ENCODE measurements at regions of chr19 and their contacts with region 1.

Region 1: GRCh38 chr19:12139885-12140547 is at the start of gene ZNF20:
- DNase-seq: peak; percentile 91
- ATAC-seq: peak; percentile 96
- H3K4me3 ChIP-seq: peak within 1 kb of the TSS; percentile 73 to 93 (median 83)
- H3K4me3 Mint-ChIP-seq: peak within 1 kb of the TSS; percentile 84
- H3K27ac ChIP-seq: peak within 1 kb of the TSS; percentile 31 to 62
- H3K27ac Mint-ChIP-seq: peak within 1 kb of the TSS; percentile 86
- H3K4me1 ChIP-seq: peaks cover 15 to 23% of the 10 kb centered on the region in 2 donors
- H3K4me1 Mint-ChIP-seq: peaks cover 34% of the 10 kb centered on the region
- H3K27me3 ChIP-seq: no peaks in the 10 kb centered on the region
- H3K27me3 Mint-ChIP-seq: no peaks in the 10 kb centered on the region
- CTCF ChIP-seq: no peak
- total RNA-seq, gene ZNF20: 5.4 and 10.6 TPM in 2 replicates

Region 2: DNA sequence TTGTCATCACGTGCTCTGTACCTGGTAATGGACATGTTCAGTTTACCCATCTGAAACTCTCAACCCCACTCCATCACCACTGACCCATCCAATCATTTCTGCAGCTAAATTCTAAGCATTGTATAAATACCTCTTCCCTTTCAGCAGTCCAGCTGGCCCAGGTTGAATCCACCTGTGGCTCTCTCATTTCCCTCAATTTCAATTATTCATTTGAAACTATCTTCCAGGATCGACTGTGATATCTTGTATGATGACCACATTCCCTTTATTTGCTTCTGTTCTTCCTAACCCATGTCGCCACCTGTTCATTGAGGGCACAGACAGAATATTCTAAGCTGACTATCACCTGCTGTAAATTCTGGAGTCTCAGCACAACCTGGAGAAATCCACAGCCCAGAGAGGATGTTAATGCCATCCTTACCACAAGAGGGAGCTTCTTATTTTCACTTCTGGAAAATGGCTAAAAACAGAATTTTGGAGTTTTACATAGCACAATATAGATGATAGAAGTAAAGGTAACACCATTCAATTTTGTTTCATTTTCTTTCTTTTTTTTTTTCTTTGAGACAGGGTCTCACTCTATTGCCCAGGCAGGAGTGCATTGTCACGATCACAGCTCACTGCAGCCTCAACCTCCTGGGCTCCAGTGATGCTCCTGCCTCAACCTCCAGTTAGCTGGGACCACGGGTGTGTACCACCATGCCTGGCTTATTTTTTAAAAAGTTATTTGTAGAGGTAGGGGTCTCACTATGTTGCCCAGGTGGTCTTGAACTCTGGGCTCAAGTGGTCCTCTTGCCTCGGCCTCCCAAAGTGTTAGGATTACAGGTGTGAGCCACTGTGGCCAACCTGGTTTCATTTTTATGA is 439.9 kb before region 1 on chr19:
- CTCF ChIA-PET with region 1: interaction called, 14 read pairs
- POLR2A ChIA-PET with region 1: no interaction called
- intact Hi-C with region 1: loop called (anchors 2 kb)
- DNase-seq: peak; percentile 54
- ATAC-seq: no peak
- H3K4me3 ChIP-seq: no peak overlapping the region
- H3K4me3 Mint-ChIP-seq: no peak overlapping the region
- H3K27ac ChIP-seq: no peak overlapping the region
- H3K27ac Mint-ChIP-seq: no peak overlapping the region
- H3K4me1 ChIP-seq: peaks cover 1% of the 10 kb centered on the region in 2 donors
- H3K4me1 Mint-ChIP-seq: peaks cover under 1% of the 10 kb centered on the region
- H3K27me3 ChIP-seq: peaks cover 0 to 7% (median 3%) of the 10 kb centered on the region in 4 experiments
- H3K27me3 Mint-ChIP-seq: peaks cover 11% of the 10 kb centered on the region
- CTCF ChIP-seq: peak; percentile 83

Region 3: DNA sequence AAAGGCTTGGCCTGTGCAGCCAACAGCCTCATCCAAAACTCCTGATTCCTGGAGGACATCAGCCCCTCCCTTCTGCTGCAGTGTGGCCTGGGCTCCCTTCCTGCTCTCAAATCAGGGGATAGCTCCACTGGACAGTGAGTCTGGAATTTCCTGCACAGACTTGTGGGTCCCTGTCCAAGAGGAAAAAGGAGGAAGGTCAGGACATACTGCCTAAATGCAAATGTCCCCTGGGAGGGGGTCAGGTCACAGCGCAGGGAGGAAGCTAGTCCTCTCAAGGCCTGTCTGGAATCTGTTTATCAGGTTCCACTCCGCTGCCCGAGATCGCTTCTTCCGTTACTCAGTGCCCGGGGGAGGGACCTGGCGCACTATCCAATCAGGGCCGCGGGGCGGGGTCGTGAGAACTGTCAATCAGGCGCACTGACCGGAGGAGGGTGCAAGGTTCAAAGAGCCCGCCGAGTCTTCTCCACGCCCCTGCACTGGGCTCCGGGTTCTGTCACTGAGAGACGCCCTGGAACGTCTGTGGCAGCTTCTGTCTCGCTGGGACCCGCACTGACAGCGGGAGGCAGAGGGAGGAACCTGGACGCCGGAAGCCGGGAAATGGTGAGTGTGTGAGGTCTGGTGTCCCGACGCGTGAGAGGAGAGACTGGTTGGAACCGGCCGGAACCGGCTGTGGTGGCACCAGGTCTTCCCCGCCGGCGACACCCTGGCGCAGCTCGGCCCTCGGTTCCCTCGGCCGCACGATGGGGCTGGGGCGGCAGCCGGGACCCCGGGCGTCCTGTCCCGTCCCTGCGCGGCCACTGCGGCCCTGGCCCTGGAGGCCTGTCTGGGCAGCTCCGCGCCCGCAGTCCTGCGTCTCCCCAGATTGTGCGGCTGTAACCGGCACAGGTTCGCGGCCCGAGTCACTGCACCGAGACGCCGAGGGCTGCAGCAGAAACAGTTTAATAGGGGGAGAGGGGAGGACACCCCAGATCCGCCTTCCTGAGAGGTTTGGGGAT is 373.1 kb before region 1 on chr19 and contains the start of gene ZNF441:
- CTCF ChIA-PET with region 1: interaction called, 3 read pairs
- POLR2A ChIA-PET with region 1: no interaction called
- intact Hi-C with region 1: loop called (anchors 1 kb)
- DNase-seq: peak; percentile 91
- ATAC-seq: peak; percentile 95
- H3K4me3 ChIP-seq: peak within 1 kb of the TSS; percentile 32 to 94 (median 87)
- H3K4me3 Mint-ChIP-seq: peak within 1 kb of the TSS; percentile 99
- H3K27ac ChIP-seq: peak within 1 kb of the TSS; percentile 90 to 94
- H3K27ac Mint-ChIP-seq: peak within 1 kb of the TSS; percentile 99
- H3K4me1 ChIP-seq: peaks cover 16 to 22% of the 10 kb centered on the region in 2 donors
- H3K4me1 Mint-ChIP-seq: peaks cover 23% of the 10 kb centered on the region
- H3K27me3 ChIP-seq: no peaks in the 10 kb centered on the region
- H3K27me3 Mint-ChIP-seq: peaks cover 4% of the 10 kb centered on the region
- CTCF ChIP-seq: no peak
- total RNA-seq, gene ZNF441: 43.5 and 45.3 TPM in 2 replicates

Region 4: GRCh38 chr19:11814029-11814699 is 325.9 kb before region 1 on chr19 and contains the start of gene ZNF440:
- CTCF ChIA-PET with region 1: interaction called, 6 read pairs
- POLR2A ChIA-PET with region 1: no interaction called
- intact Hi-C with region 1: loop called (anchors 5 kb)
- DNase-seq: peak; percentile 85
- ATAC-seq: peak; percentile 99
- H3K4me3 ChIP-seq: peak within 1 kb of the TSS; percentile 75 to 94 (median 82)
- H3K4me3 Mint-ChIP-seq: peak within 1 kb of the TSS; percentile 91
- H3K27ac ChIP-seq: peak within 1 kb of the TSS; percentile 39 to 66
- H3K27ac Mint-ChIP-seq: peak within 1 kb of the TSS; percentile 85
- H3K4me1 ChIP-seq: peaks cover 4 to 14% of the 10 kb centered on the region in 2 donors
- H3K4me1 Mint-ChIP-seq: peaks cover 29% of the 10 kb centered on the region
- H3K27me3 ChIP-seq: no peaks in the 10 kb centered on the region
- H3K27me3 Mint-ChIP-seq: no peaks in the 10 kb centered on the region
- CTCF ChIP-seq: no peak
- total RNA-seq, gene ZNF440: 22.4 and 23.4 TPM in 2 replicates

Region 5: GRCh38 chr19:11964858-11965645 is 175.0 kb before region 1 on chr19 and contains the start of gene ZNF763:
- CTCF ChIA-PET with region 1: interaction called, 44 read pairs
- POLR2A ChIA-PET with region 1: interaction called, 5 read pairs
- intact Hi-C with region 1: loop called (anchors 1 kb)
- DNase-seq: peak; percentile 95
- ATAC-seq: peak; percentile 91
- H3K4me3 ChIP-seq: peak within 1 kb of the TSS; percentile 76 to 97 (median 89)
- H3K4me3 Mint-ChIP-seq: peak within 1 kb of the TSS; percentile 99
- H3K27ac ChIP-seq: peak within 1 kb of the TSS; percentile 99
- H3K27ac Mint-ChIP-seq: peak within 1 kb of the TSS; percentile 99
- H3K4me1 ChIP-seq: peaks cover 14 to 20% of the 10 kb centered on the region in 2 donors
- H3K4me1 Mint-ChIP-seq: peaks cover 27% of the 10 kb centered on the region
- H3K27me3 ChIP-seq: no peaks in the 10 kb centered on the region
- H3K27me3 Mint-ChIP-seq: no peaks in the 10 kb centered on the region
- CTCF ChIP-seq: no peak
- total RNA-seq, gene ZNF763: 14.2 and 16.6 TPM in 2 replicates

Region 6: DNA sequence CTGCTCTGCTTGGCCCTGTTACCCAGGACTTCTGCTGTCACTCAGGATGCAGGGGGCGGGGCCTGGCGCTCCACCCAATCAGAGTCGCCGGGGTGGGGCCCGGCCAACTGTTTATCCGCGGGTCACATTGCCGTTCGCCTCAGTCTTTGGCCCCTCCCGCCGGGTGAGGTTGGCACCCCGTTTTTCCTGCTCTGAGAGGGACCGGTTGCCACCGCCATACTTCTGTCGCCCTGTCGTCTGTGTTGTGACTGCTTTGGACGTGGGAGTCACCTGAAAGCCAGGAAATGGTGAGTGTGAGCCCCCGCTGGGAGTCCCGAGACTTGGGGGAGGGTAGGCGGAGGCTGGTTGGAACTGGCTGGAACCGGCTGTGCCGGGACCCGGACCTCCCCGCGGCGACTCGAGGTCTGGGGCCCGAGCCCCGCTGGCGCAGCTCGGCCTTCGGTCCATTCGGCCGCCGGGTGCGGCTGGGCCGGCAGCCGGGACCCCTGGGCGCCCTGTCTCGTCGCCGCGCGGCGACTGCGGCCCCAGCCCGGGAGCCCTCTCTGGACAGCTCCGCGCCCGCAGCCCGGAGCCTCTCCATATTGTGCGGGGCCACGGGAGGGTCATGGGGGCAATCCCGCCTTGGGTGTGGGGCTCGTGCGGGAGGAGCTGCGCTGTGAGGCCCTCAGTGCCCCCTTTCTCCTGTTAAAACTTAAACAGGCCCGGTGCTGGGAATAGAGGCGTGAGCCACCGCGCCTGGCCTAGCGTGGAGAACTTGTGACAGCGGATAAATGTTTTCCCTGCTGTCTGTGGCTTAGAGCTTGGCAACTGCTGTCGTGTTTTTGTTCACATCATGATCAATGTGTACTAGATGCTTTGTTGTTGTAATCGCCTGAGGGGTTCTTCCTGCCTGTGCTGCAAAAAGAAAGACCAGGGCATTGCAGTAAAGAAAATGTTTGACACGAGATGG is 75.2 kb before region 1 on chr19 and contains the start of gene ZNF844:
- CTCF ChIA-PET with region 1: interaction called, 60 read pairs
- POLR2A ChIA-PET with region 1: interaction called, 4 read pairs
- intact Hi-C with region 1: loop called (anchors 1 kb)
- DNase-seq: peak; percentile 89
- ATAC-seq: peak; percentile 96
- H3K4me3 ChIP-seq: peak within 1 kb of the TSS; percentile 73 to 93 (median 76)
- H3K4me3 Mint-ChIP-seq: peak within 1 kb of the TSS; percentile 95
- H3K27ac ChIP-seq: peak within 1 kb of the TSS; percentile 83 to 87
- H3K27ac Mint-ChIP-seq: peak within 1 kb of the TSS; percentile 94
- H3K4me1 ChIP-seq: peaks cover 6 to 16% of the 10 kb centered on the region in 2 donors
- H3K4me1 Mint-ChIP-seq: peaks cover 11% of the 10 kb centered on the region
- H3K27me3 ChIP-seq: no peaks in the 10 kb centered on the region
- H3K27me3 Mint-ChIP-seq: no peaks in the 10 kb centered on the region
- CTCF ChIP-seq: no peak
- total RNA-seq, gene ZNF844: 33.7 and 36.4 TPM in 2 replicates

Region 7: DNA sequence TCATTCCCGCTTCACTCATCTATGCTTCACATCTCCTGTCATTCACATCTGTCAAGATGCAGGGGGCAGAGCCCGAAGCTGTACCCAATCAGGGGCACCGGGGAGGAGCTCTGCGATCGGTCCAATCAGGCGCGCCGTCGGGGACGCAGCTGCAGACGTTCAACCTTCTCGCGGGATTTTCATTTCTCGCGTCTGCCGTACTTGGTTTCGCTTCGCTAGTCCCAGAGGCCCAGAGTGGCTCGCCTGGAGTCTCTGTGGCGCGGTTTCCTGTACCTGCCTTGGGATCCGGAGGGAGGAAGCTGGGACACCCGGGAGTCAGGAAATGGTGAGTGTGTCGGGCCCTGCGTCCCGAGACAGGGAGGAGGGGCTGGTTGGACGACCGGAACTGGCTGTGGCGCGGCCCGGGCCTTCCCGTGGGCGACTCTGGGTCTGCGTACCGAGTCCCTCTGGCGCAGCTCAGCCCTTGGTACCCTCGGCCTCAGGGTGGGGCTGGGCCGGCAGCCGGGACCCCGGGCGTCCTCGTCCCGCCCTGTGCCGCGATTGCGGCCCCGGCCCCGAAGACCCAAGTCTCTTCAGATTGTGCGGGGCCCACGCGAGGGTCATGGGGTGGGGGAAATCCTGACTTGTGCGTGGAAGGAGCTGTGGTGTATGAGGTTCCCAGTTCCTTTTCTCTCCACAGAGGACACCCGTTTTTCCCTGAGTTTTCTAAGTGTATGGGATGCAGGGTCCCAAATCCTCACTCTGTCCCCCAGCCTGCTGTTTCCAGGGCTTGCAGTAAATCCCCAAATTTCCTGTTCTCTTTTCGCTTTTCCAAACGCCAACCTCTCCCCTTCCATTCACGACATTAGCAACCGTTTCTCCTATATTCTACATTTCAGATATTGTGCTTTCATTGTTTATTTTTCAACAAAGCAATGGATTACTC is 23.1 kb after region 1 on chr19 and contains the start of gene ZNF136:
- CTCF ChIA-PET with region 1: interaction called, 4 read pairs
- POLR2A ChIA-PET with region 1: interaction called, 5 read pairs
- intact Hi-C with region 1: loop called (anchors 2 kb)
- DNase-seq: peak; percentile 94
- ATAC-seq: peak; percentile 99
- H3K4me3 ChIP-seq: peak within 1 kb of the TSS; percentile 58 to 96 (median 91)
- H3K4me3 Mint-ChIP-seq: peak within 1 kb of the TSS; percentile 92
- H3K27ac ChIP-seq: peak within 1 kb of the TSS; percentile 96 to 99
- H3K27ac Mint-ChIP-seq: peak within 1 kb of the TSS; percentile 99
- H3K4me1 ChIP-seq: peaks cover 10 to 15% of the 10 kb centered on the region in 2 donors
- H3K4me1 Mint-ChIP-seq: peaks cover 34% of the 10 kb centered on the region
- H3K27me3 ChIP-seq: no peaks in the 10 kb centered on the region
- H3K27me3 Mint-ChIP-seq: no peaks in the 10 kb centered on the region
- CTCF ChIP-seq: no peak
- total RNA-seq, gene ZNF136: 30.8 and 33.5 TPM in 2 replicates

Region 8: GRCh38 chr19:12333162-12334159 is 193.4 kb after region 1 on chr19 and contains the start of gene ZNF563:
- CTCF ChIA-PET with region 1: no interaction called
- POLR2A ChIA-PET with region 1: no interaction called
- intact Hi-C with region 1: no loop called
- DNase-seq: peak; percentile 95
- ATAC-seq: peak; percentile 92
- H3K4me3 ChIP-seq: peak within 1 kb of the TSS; percentile 53 to 97 (median 83)
- H3K4me3 Mint-ChIP-seq: peak within 1 kb of the TSS; percentile 88
- H3K27ac ChIP-seq: peak within 1 kb of the TSS; percentile 76 to 86
- H3K27ac Mint-ChIP-seq: peak within 1 kb of the TSS; percentile 95
- H3K4me1 ChIP-seq: peaks cover 30 to 35% of the 10 kb centered on the region in 2 donors
- H3K4me1 Mint-ChIP-seq: peaks cover 37% of the 10 kb centered on the region
- H3K27me3 ChIP-seq: no peaks in the 10 kb centered on the region
- H3K27me3 Mint-ChIP-seq: no peaks in the 10 kb centered on the region
- CTCF ChIP-seq: no peak
- total RNA-seq, gene ZNF563: 6.1 and 7.3 TPM in 2 replicates

Region 9: GRCh38 chr19:14081325-14082093 is 1941.5 kb after region 1 on chr19:
- CTCF ChIA-PET with region 1: no interaction called
- POLR2A ChIA-PET with region 1: no interaction called
- intact Hi-C with region 1: no loop called
- DNase-seq: peak; percentile 99
- ATAC-seq: peak; percentile 91
- H3K4me3 ChIP-seq: peak overlapping the region; percentile 65 to 89 (median 77)
- H3K4me3 Mint-ChIP-seq: peak overlapping the region; percentile 96
- H3K27ac ChIP-seq: peak overlapping the region; percentile 72 to 89
- H3K27ac Mint-ChIP-seq: peak overlapping the region; percentile 96
- H3K4me1 ChIP-seq: peaks cover 14 to 18% of the 10 kb centered on the region in 2 donors
- H3K4me1 Mint-ChIP-seq: peaks cover 12% of the 10 kb centered on the region
- H3K27me3 ChIP-seq: no peaks in the 10 kb centered on the region
- H3K27me3 Mint-ChIP-seq: no peaks in the 10 kb centered on the region
- CTCF ChIP-seq: peak; percentile 10

Measured in B cell (primary cell).